Adrenal gland (tissue), 19 donors: ENCODE measurements at regions of chrX and their contacts with region 1.

Region 1: GRCh38 chrX:150372280-150372679 is 9.2 kb downstream of the MAMLD1 start:
- DNase-seq: no peak
- H3K4me3 ChIP-seq: no peak overlapping the region
- H3K27ac ChIP-seq: no peak overlapping the region
- H3K4me1 ChIP-seq: no peaks in the 10 kb centered on the region
- H3K27me3 ChIP-seq: no peaks in the 10 kb centered on the region
- CTCF ChIP-seq: no peak
- POLR2A ChIP-seq: no peak

Region 2: GRCh38 chrX:150478496-150479492 is 106.5 kb after region 1 on chrX:
- intact Hi-C with region 1: loop called in 1 of 2 experiments (anchors 10 kb)
- DNase-seq: no peak
- H3K4me3 ChIP-seq: no peak overlapping the region
- H3K27ac ChIP-seq: no peak overlapping the region
- H3K4me1 ChIP-seq: no peaks in the 10 kb centered on the region
- H3K27me3 ChIP-seq: peaks cover 7% of the 10 kb centered on the region
- CTCF ChIP-seq: no peak
- POLR2A ChIP-seq: no peak